Thyroid gland (tissue), 4 donors: ENCODE measurements at regions of chr13 and their contacts with region 1.

Region 1: GRCh38 chr13:43804461-43805070 is 17.8 kb upstream of the ENOX1 start:
- DNase-seq: no peak
- H3K4me3 ChIP-seq: no peak overlapping the region
- H3K27ac ChIP-seq: no peak overlapping the region
- H3K4me1 ChIP-seq: peaks cover 0 to 8% of the 10 kb centered on the region in 2 donors
- H3K27me3 ChIP-seq: no peaks in the 10 kb centered on the region
- CTCF ChIP-seq: peak in 4 of 6 experiments; percentile 14 to 65 (median 56)
- POLR2A ChIP-seq: no peak

Region 2: GRCh38 chr13:42594970-42595571 is 1209.5 kb before region 1 on chr13:
- intact Hi-C with region 1: loop called (anchors 10 kb)
- DNase-seq: peak; percentile 52 to 60
- H3K4me3 ChIP-seq: no peak overlapping the region
- H3K27ac ChIP-seq: no peak overlapping the region
- H3K4me1 ChIP-seq: no peaks in the 10 kb centered on the region
- H3K27me3 ChIP-seq: no peaks in the 10 kb centered on the region
- CTCF ChIP-seq: peak; percentile 35 to 86 (median 64)
- POLR2A ChIP-seq: no peak

Region 3: GRCh38 chr13:43085545-43085944 is 719.0 kb before region 1 on chr13:
- intact Hi-C with region 1: loop called (anchors 10 kb)
- DNase-seq: no peak
- H3K4me3 ChIP-seq: no peak overlapping the region
- H3K27ac ChIP-seq: no peak overlapping the region
- H3K4me1 ChIP-seq: no peaks in the 10 kb centered on the region
- H3K27me3 ChIP-seq: no peaks in the 10 kb centered on the region
- CTCF ChIP-seq: peak; percentile 16 to 73 (median 61)
- POLR2A ChIP-seq: no peak

Region 4: GRCh38 chr13:43865892-43866291 is 61.3 kb after region 1 on chr13:
- intact Hi-C with region 1: no loop called
- DNase-seq: no peak
- H3K4me3 ChIP-seq: no peak overlapping the region
- H3K27ac ChIP-seq: no peak overlapping the region
- H3K4me1 ChIP-seq: no peaks in the 10 kb centered on the region
- H3K27me3 ChIP-seq: no peaks in the 10 kb centered on the region
- CTCF ChIP-seq: no peak
- POLR2A ChIP-seq: no peak